IMR-90 (cell line): ENCODE measurements at regions of chr3 and their contacts with region 1.

Region 1: GRCh38 chr3:33372218-33373081 is 67.8 kb downstream of the UBP1 start:
- DNase-seq: peak; percentile 73
- ATAC-seq: peak; percentile 86
- H3K4me3 ChIP-seq: no peak overlapping the region
- H3K27ac ChIP-seq: no peak overlapping the region
- H3K4me1 ChIP-seq: peaks cover 5% of the 10 kb centered on the region; the same call in 1 of the 2 replicates
- H3K27me3 ChIP-seq: no peaks in the 10 kb centered on the region
- CTCF ChIP-seq: peak; percentile 87
- POLR2A ChIP-seq: peak; percentile 43; the same call in 1 of the 2 replicates
- RAD21 ChIP-seq: peak; percentile 88

Region 2: DNA sequence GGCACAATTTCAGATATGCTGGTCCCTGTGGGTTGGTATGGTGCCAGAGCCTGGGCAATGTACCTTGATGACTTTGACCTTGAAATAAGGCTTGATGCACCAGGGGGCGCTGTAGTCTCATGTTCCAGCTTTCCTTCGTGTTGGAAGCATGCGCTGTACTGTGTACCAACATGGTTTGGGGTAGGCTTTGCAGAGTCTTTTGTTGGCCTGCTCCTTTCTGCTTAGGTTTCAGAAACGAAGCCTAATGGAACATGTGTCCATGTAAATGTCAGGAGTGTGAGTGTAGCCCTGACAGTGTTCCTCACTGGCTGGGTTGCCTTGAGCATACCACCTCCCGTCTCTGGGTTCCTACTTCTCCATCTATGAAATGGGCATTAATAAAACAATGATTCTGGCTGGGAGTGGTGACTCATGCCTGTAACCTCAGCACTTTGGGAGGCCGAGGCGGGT is 424.6 kb before region 1 on chr3:
- CTCF ChIA-PET with region 1: no interaction called
- POLR2A ChIA-PET with region 1: no interaction called
- dilution Hi-C with region 1: no loop called
- in situ Hi-C with region 1: loop called (anchors 25 kb)
- intact Hi-C with region 1: loop called (anchors 2 kb)
- DNase-seq: peak; percentile 75
- ATAC-seq: peak; percentile 94
- H3K4me3 ChIP-seq: no peak overlapping the region
- H3K27ac ChIP-seq: no peak overlapping the region
- H3K4me1 ChIP-seq: no peaks in the 10 kb centered on the region
- H3K27me3 ChIP-seq: peaks cover 6% of the 10 kb centered on the region
- CTCF ChIP-seq: peak; percentile 78
- POLR2A ChIP-seq: no peak
- RAD21 ChIP-seq: peak; percentile 87

Region 3: DNA sequence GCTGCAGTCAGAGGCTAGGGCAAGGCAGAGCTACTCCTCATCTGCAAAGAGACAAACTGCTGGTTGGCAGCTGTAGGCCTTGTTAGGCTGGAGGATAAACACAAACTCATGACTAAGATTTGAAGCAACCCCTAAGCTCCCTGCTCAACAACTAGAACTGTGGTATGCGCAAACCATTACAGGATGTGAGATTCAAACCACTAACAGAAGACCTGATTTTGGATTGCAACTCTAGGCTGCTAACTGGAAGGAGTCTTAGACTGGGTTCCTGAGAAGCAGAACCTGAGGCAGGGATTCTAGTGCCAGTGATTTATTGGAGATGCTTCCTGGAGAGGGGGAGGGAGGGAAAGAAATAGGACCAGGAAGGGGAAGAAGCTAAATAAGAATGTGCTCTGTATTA is 398.5 kb before region 1 on chr3:
- CTCF ChIA-PET with region 1: no interaction called
- POLR2A ChIA-PET with region 1: no interaction called
- dilution Hi-C with region 1: no loop called
- in situ Hi-C with region 1: loop called (anchors 25 kb)
- intact Hi-C with region 1: no loop called
- DNase-seq: peak; percentile 63
- ATAC-seq: peak; percentile 97
- H3K4me3 ChIP-seq: no peak overlapping the region
- H3K27ac ChIP-seq: no peak overlapping the region
- H3K4me1 ChIP-seq: no peaks in the 10 kb centered on the region; the same call in 1 of the 2 replicates
- H3K27me3 ChIP-seq: peaks cover 8% of the 10 kb centered on the region
- CTCF ChIP-seq: no peak
- POLR2A ChIP-seq: no peak
- RAD21 ChIP-seq: no peak

Region 4: GRCh38 chr3:33137691-33138090 is 234.8 kb before region 1 on chr3:
- CTCF ChIA-PET with region 1: interaction called, 10 read pairs
- POLR2A ChIA-PET with region 1: no interaction called
- dilution Hi-C with region 1: loop called (anchors 25 kb)
- in situ Hi-C with region 1: loop called (anchors 5 kb)
- intact Hi-C with region 1: no loop called
- DNase-seq: no peak
- ATAC-seq: no peak
- H3K4me3 ChIP-seq: no peak overlapping the region
- H3K27ac ChIP-seq: no peak overlapping the region
- H3K4me1 ChIP-seq: peaks cover 3% of the 10 kb centered on the region
- H3K27me3 ChIP-seq: no peaks in the 10 kb centered on the region
- CTCF ChIP-seq: no peak
- POLR2A ChIP-seq: no peak
- RAD21 ChIP-seq: no peak

Region 5: DNA sequence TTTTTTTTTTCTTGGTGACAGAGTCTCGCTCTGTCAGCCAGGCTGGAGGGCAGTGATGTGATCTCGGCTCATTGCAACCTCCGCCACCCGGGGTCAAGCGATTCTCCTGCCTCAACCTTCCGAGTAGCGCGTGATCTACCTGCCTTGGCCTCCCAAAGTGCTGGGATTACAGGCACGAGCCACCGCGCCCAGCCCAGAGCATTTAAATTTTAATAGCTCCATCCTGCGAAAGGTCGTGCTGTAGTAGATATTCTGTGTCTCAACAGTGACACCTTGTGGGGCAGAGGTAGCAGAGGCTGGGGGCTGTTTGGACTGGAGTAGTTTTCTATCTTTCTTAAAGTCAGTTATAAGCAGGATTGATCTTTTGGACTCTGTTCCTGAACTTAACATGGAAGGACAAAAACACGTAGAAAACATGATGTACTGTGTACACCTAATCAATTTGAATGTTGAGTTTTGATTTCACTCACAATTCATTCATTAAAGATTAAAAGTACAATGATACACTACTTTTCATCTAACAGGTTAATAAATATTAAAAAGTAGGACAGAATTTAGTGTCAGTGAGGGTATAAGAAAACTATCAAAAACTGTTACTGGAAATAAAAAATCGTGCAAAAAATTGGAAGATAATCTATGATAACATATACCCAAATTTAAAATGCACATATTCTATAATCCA is 415.0 kb after region 1 on chr3:
- CTCF ChIA-PET with region 1: interaction called, 10 read pairs
- POLR2A ChIA-PET with region 1: no interaction called
- dilution Hi-C with region 1: no loop called
- in situ Hi-C with region 1: no loop called
- intact Hi-C with region 1: no loop called
- DNase-seq: peak; percentile 72
- ATAC-seq: peak; percentile 97
- H3K4me3 ChIP-seq: peak overlapping the region; percentile 28
- H3K27ac ChIP-seq: no peak overlapping the region
- H3K4me1 ChIP-seq: peaks cover 2% of the 10 kb centered on the region
- H3K27me3 ChIP-seq: no peaks in the 10 kb centered on the region
- CTCF ChIP-seq: peak; percentile 84
- POLR2A ChIP-seq: no peak
- RAD21 ChIP-seq: peak; percentile 78